Endothelial cell of umbilical vein (primary cell): ENCODE measurements at regions of chr6 and their contacts with region 1.

Region 1: DNA sequence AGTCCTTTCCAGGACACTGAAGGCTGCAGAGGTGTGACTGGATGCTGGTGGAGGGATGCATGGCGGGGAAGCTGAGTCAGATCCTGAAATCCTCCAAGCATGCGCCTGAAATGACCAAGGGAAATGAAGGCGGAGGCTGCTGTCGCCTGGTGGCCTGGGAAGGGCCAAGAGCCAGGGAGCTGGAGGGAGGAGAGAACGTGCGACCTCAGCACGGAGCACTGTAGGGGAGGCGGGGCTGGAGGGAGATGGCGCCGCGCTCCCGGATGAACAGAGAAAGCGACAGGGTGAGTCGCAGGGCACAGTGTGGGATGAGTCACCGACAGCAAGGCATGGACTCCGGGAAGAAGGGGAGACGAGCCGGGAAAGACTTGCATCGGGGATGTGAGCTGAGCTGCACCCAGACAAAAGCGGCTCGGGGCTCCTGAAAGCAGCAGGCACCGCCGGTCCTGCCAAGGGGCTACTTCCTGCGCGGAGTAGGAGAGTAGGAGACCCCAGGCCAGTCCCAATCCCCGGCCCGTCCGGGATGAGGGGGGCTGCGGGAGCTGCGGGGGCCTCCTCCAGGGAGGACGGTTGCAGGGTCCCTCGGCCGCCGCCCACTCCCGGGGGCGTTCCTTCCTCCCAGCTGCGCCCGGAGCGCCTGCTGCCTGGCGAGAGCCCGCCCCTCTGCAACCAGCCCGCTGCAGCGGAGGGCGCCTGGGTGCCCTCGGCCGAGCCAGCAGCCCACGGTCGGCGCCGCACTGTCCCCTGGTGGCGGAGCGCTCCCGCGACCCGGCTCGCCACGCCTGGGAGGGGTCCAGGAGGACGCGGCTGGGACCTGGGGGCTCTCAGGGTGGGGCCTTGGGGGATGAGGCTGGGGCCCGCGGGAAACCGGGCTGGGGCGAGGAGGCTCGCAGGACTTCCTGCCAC is 11.0 kb upstream of the NQO2 start:
- DNase-seq: peak; percentile 98
- H3K4me3 ChIP-seq: peak overlapping the region; percentile 53 to 78 (median 68)
- H3K27ac ChIP-seq: peak overlapping the region; percentile 84
- H3K4me1 ChIP-seq: peaks cover 15% of the 10 kb centered on the region
- H3K27me3 ChIP-seq: no peaks in the 10 kb centered on the region
- CTCF ChIP-seq: peak; percentile 80 to 82
- POLR2A ChIP-seq: peak; percentile 93

Region 2: DNA sequence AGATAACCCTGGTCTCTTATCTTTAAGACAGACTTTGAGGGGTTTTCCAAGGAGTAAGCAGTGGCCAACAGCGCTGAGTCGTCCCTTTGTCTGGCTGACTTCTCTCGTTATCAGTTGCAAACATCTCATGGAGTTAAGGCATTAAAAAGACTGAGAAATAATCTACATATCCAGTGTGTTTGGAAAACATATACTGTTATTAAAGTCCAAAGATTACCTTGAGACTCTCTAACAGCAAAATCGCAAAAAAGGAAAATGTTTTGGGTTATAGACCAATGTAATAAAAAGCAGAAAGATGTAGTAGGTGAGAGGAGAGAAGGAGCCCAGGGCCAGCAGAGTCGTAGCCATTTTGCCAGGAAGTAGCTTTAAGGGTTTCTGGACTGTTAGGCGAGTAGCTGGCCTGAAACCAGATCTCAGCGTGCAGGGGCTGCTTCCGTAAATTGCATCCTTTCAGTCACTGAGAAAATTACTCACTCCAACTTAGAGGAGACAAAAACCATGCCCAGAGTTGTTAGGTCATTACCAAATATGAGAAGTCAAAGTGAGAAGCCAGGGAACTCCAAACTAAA is 262.6 kb before region 1 on chr6:
- CTCF ChIA-PET with region 1: no interaction called
- POLR2A ChIA-PET with region 1: no interaction called
- dilution Hi-C with region 1: no loop called
- intact Hi-C with region 1: no loop called
- DNase-seq: peak; percentile 68
- H3K4me3 ChIP-seq: no peak overlapping the region
- H3K27ac ChIP-seq: peak overlapping the region; percentile 75
- H3K4me1 ChIP-seq: peaks cover 9% of the 10 kb centered on the region
- H3K27me3 ChIP-seq: no peaks in the 10 kb centered on the region
- CTCF ChIP-seq: no peak
- POLR2A ChIP-seq: no peak

Region 3: DNA sequence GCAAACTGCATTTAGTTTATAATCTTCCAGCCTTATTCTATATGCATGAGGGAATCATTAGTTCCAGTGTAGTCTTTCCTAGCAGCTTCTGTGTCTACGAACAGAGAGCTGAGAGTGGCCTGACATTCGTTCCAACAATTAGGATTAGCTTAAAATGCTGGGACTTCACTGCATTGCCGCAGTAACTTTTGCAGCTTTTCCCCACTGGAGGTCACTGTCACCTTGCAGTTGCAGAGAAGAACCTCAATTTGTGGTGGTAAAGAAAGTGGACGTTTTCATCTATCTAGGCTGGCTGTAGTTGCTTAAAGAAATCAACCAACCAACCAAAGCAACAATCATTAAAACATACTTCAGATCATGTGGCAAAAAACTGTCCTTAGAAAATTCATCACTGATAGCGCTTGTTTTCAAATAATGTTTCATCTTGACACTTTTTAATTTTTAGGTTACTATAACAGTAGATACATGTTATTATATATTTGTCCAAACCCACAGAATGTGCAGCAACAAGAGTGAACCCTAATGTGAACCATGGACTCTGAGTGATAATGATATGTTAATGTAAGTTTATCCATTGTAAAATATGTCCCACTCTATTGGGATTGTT is 250.2 kb before region 1 on chr6:
- CTCF ChIA-PET with region 1: interaction called, 15 read pairs
- POLR2A ChIA-PET with region 1: no interaction called
- dilution Hi-C with region 1: no loop called
- intact Hi-C with region 1: no loop called
- DNase-seq: peak; percentile 72
- H3K4me3 ChIP-seq: no peak overlapping the region
- H3K27ac ChIP-seq: no peak overlapping the region
- H3K4me1 ChIP-seq: no peaks in the 10 kb centered on the region
- H3K27me3 ChIP-seq: no peaks in the 10 kb centered on the region
- CTCF ChIP-seq: peak; percentile 54 to 64
- POLR2A ChIP-seq: no peak

Region 4: GRCh38 chr6:2791124-2791974 is 197.3 kb before region 1 on chr6:
- CTCF ChIA-PET with region 1: interaction called, 52 read pairs
- POLR2A ChIA-PET with region 1: no interaction called
- dilution Hi-C with region 1: no loop called
- intact Hi-C with region 1: loop called (anchors 1 kb)
- DNase-seq: peak; percentile 92
- H3K4me3 ChIP-seq: no peak overlapping the region
- H3K27ac ChIP-seq: peak overlapping the region; percentile 25
- H3K4me1 ChIP-seq: peaks cover 5% of the 10 kb centered on the region
- H3K27me3 ChIP-seq: no peaks in the 10 kb centered on the region
- CTCF ChIP-seq: peak; percentile 71 to 79
- POLR2A ChIP-seq: no peak

Region 5: GRCh38 chr6:2863901-2864300 is 124.8 kb before region 1 on chr6:
- CTCF ChIA-PET with region 1: no interaction called
- POLR2A ChIA-PET with region 1: no interaction called
- dilution Hi-C with region 1: no loop called
- intact Hi-C with region 1: no loop called
- DNase-seq: no peak
- H3K4me3 ChIP-seq: no peak overlapping the region
- H3K27ac ChIP-seq: no peak overlapping the region
- H3K4me1 ChIP-seq: peaks cover 15% of the 10 kb centered on the region
- H3K27me3 ChIP-seq: no peaks in the 10 kb centered on the region
- CTCF ChIP-seq: no peak
- POLR2A ChIP-seq: no peak

Region 6: GRCh38 chr6:2876210-2877056 is 112.2 kb before region 1 on chr6:
- CTCF ChIA-PET with region 1: no interaction called
- POLR2A ChIA-PET with region 1: interaction called, 3 read pairs
- dilution Hi-C with region 1: no loop called
- intact Hi-C with region 1: loop called (anchors 1 kb)
- DNase-seq: peak; percentile 98
- H3K4me3 ChIP-seq: peak overlapping the region in 2 of 3 experiments; percentile 28 to 53
- H3K27ac ChIP-seq: peak overlapping the region; percentile 91
- H3K4me1 ChIP-seq: peaks cover 29% of the 10 kb centered on the region
- H3K27me3 ChIP-seq: no peaks in the 10 kb centered on the region
- CTCF ChIP-seq: no peak
- POLR2A ChIP-seq: peak; percentile 55

Region 7: GRCh38 chr6:2931970-2932748 is 56.5 kb before region 1 on chr6:
- CTCF ChIA-PET with region 1: interaction called, 12 read pairs
- POLR2A ChIA-PET with region 1: interaction called, 3 read pairs
- dilution Hi-C with region 1: no loop called
- intact Hi-C with region 1: no loop called
- DNase-seq: peak; percentile 84
- H3K4me3 ChIP-seq: no peak overlapping the region
- H3K27ac ChIP-seq: no peak overlapping the region
- H3K4me1 ChIP-seq: peaks cover 2% of the 10 kb centered on the region
- H3K27me3 ChIP-seq: no peaks in the 10 kb centered on the region
- CTCF ChIP-seq: peak; percentile 93 to 96
- POLR2A ChIP-seq: no peak

Region 8: DNA sequence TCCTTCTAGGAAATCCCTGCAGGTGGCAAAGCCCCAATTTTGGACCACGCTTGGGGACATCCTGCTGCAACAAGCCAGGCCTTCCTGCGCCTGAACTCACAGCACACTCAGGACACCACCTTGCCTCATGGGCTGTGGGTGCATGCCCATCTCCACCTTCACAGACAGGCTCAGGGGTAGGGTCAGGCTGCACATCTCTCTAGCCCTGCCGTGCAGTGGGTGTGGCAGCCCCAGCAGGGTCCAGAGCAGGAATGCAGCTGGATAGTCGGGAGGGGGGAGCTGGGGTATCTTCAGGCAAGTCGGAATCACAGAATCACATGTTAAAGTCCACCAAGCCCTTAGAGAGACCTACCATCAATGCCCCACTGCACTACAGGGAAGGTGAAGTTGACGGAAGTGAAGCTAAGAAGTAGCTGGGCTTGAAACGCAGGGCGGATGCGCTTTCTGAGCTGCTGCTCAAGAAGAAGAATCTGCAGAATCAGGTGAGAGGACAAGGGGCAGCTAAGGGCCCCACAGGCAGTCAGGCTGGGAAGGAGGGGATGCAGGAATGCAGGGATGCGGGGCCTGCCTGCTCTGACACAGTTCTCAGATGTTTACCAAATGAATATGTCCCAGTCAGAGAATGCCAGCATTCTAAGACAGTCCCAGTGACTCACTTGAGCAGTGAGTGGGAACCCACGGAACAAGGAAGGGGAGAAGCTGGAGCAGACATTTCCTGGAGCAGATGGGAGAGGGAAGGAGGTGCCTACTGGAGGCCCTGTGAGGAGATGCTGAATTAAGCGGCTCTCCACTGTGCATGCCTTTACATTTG is 28.6 kb before region 1 on chr6:
- CTCF ChIA-PET with region 1: interaction called, 331 read pairs
- POLR2A ChIA-PET with region 1: no interaction called
- dilution Hi-C with region 1: no loop called
- intact Hi-C with region 1: no loop called
- DNase-seq: peak; percentile 76
- H3K4me3 ChIP-seq: no peak overlapping the region
- H3K27ac ChIP-seq: peak overlapping the region; percentile 28
- H3K4me1 ChIP-seq: peaks cover 18% of the 10 kb centered on the region
- H3K27me3 ChIP-seq: no peaks in the 10 kb centered on the region
- CTCF ChIP-seq: no peak
- POLR2A ChIP-seq: no peak

Region 9: GRCh38 chr6:2976571-2977085 is 12.1 kb before region 1 on chr6:
- CTCF ChIA-PET with region 1: interaction called, 11 read pairs
- POLR2A ChIA-PET with region 1: interaction called, 5 read pairs
- dilution Hi-C with region 1: no loop called
- intact Hi-C with region 1: loop called (anchors 1 kb)
- DNase-seq: peak; percentile 71
- H3K4me3 ChIP-seq: no peak overlapping the region
- H3K27ac ChIP-seq: peak overlapping the region; percentile 21
- H3K4me1 ChIP-seq: peaks cover 27% of the 10 kb centered on the region
- H3K27me3 ChIP-seq: no peaks in the 10 kb centered on the region
- CTCF ChIP-seq: no peak
- POLR2A ChIP-seq: no peak

Region 10: DNA sequence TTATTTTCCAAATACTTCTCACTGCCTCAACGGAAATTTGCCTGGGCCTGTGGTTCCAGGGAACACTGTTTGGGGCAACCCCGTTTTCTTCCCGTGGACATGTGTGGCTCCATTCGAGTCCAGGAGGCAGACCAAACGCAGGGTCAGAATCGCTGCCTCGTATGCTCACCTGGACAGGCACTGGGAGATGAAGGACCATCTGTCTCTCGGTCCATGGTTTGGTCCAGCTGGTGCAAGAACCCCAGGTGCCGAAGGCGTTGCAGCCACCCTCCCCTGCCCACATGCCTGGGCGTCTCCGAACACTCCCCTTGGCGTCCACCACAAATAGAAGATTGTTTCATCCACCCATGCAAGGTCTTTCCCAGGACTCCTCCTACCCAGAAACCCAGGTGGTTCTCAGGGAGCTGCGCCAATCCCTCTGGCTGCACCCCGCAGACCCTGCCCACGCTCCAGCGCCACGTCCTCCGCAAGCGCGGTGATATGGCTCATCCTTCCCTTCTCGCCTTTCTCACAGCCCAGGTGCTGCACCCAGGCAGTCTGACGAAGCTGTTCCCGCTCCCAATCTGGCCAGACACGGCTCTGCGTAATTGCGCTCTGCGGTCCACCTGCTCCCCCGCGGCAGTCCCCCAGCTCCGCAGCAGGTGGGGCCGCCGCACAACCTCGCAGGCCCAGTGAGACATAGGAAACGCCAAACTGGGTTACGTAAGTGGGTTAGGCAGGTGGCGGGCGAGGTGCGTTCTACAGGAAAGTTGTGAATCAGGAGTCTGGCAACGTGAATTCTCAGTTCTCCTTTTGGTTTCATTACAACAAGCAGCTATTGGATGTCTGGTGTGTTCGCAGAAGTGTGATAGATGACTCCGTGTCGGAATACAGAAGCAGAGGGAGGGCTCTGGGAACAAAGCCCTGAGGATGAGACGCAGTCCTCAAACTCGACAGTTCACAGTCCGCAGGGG is 1292.9 kb after region 1 on chr6:
- CTCF ChIA-PET with region 1: no interaction called
- POLR2A ChIA-PET with region 1: no interaction called
- dilution Hi-C with region 1: no loop called
- intact Hi-C with region 1: no loop called
- DNase-seq: peak; percentile 64
- H3K4me3 ChIP-seq: peak overlapping the region in 2 of 3 experiments; percentile 11 to 26
- H3K27ac ChIP-seq: no peak overlapping the region
- H3K4me1 ChIP-seq: peaks cover 3% of the 10 kb centered on the region
- H3K27me3 ChIP-seq: peaks cover 2% of the 10 kb centered on the region in 2 experiments
- CTCF ChIP-seq: peak in 1 of 2 donors; percentile 46
- POLR2A ChIP-seq: no peak